Activated CD4-positive, alpha-beta T cell treated with anti-CD3 and anti-CD28 coated beads for 36 hours (primary cell): ENCODE measurements at regions of chr20 and their contacts with region 1.

Region 1: GRCh38 chr20:59782986-59783640 is 150.3 kb downstream of the SYCP2 start:
- DNase-seq: peak; percentile 71
- ATAC-seq: peak; percentile 33
- H3K4me3 Mint-ChIP-seq: no peak overlapping the region
- H3K27ac Mint-ChIP-seq: no peak overlapping the region
- H3K4me1 Mint-ChIP-seq: no peaks in the 10 kb centered on the region
- H3K27me3 Mint-ChIP-seq: peaks cover 10% of the 10 kb centered on the region

Region 2: GRCh38 chr20:59455402-59456341 is 327.4 kb before region 1 on chr20:
- CTCF ChIA-PET with region 1: no interaction called
- POLR2A ChIA-PET with region 1: no interaction called
- intact Hi-C with region 1: no loop called
- DNase-seq: no peak
- ATAC-seq: no peak
- H3K4me3 Mint-ChIP-seq: no peak overlapping the region
- H3K27ac Mint-ChIP-seq: no peak overlapping the region
- H3K4me1 Mint-ChIP-seq: no peaks in the 10 kb centered on the region
- H3K27me3 Mint-ChIP-seq: peaks cover 6% of the 10 kb centered on the region

Region 3: GRCh38 chr20:59661153-59661552 is 122.0 kb before region 1 on chr20:
- CTCF ChIA-PET with region 1: no interaction called
- POLR2A ChIA-PET with region 1: no interaction called
- intact Hi-C with region 1: no loop called
- DNase-seq: no peak
- ATAC-seq: no peak
- H3K4me3 Mint-ChIP-seq: no peak overlapping the region
- H3K27ac Mint-ChIP-seq: no peak overlapping the region
- H3K4me1 Mint-ChIP-seq: no peaks in the 10 kb centered on the region
- H3K27me3 Mint-ChIP-seq: peaks cover 14% of the 10 kb centered on the region

Region 4: GRCh38 chr20:59955132-59955796 is 172.2 kb after region 1 on chr20:
- CTCF ChIA-PET with region 1: interaction called, 3 read pairs
- POLR2A ChIA-PET with region 1: no interaction called
- intact Hi-C with region 1: loop called in 1 of 2 experiments (anchors 1 kb)
- DNase-seq: no peak
- ATAC-seq: peak; percentile 58
- H3K4me3 Mint-ChIP-seq: no peak overlapping the region
- H3K27ac Mint-ChIP-seq: no peak overlapping the region
- H3K4me1 Mint-ChIP-seq: no peaks in the 10 kb centered on the region
- H3K27me3 Mint-ChIP-seq: no peaks in the 10 kb centered on the region